Activated B cell treated with CpG ODN at 0.5 μM for 24 hours (primary cell): ENCODE measurements at regions of chr7 and their contacts with region 1.

Region 1: GRCh38 chr7:24812310-24812945 is 55.2 kb upstream of the GSDME start:
- DNase-seq: no peak
- ATAC-seq: peak; percentile 61
- H3K4me3 Mint-ChIP-seq: no peak overlapping the region
- H3K27ac Mint-ChIP-seq: no peak overlapping the region
- H3K4me1 Mint-ChIP-seq: no peaks in the 10 kb centered on the region
- H3K27me3 Mint-ChIP-seq: no peaks in the 10 kb centered on the region
- CTCF ChIP-seq: peak; percentile 85

Region 2: GRCh38 chr7:24701261-24702235 is 110.9 kb before region 1 on chr7:
- CTCF ChIA-PET with region 1: no interaction called
- POLR2A ChIA-PET with region 1: no interaction called
- intact Hi-C with region 1: no loop called
- DNase-seq: no peak
- ATAC-seq: no peak
- H3K4me3 Mint-ChIP-seq: no peak overlapping the region
- H3K27ac Mint-ChIP-seq: no peak overlapping the region
- H3K4me1 Mint-ChIP-seq: peaks cover 21% of the 10 kb centered on the region
- H3K27me3 Mint-ChIP-seq: no peaks in the 10 kb centered on the region
- CTCF ChIP-seq: no peak

Region 3: GRCh38 chr7:24732646-24733413 is 79.6 kb before region 1 on chr7:
- CTCF ChIA-PET with region 1: no interaction called
- POLR2A ChIA-PET with region 1: no interaction called
- intact Hi-C with region 1: no loop called
- DNase-seq: no peak
- ATAC-seq: no peak
- H3K4me3 Mint-ChIP-seq: no peak overlapping the region
- H3K27ac Mint-ChIP-seq: no peak overlapping the region
- H3K4me1 Mint-ChIP-seq: peaks cover 6% of the 10 kb centered on the region
- H3K27me3 Mint-ChIP-seq: peaks cover 6% of the 10 kb centered on the region
- CTCF ChIP-seq: no peak

Region 4: GRCh38 chr7:24764972-24765744 is 47.3 kb before region 1 on chr7:
- CTCF ChIA-PET with region 1: no interaction called
- POLR2A ChIA-PET with region 1: interaction called, 10 read pairs
- intact Hi-C with region 1: no loop called
- DNase-seq: no peak
- ATAC-seq: no peak
- H3K4me3 Mint-ChIP-seq: no peak overlapping the region
- H3K27ac Mint-ChIP-seq: no peak overlapping the region
- H3K4me1 Mint-ChIP-seq: peaks cover 2% of the 10 kb centered on the region
- H3K27me3 Mint-ChIP-seq: peaks cover 32% of the 10 kb centered on the region
- CTCF ChIP-seq: no peak

Region 5: DNA sequence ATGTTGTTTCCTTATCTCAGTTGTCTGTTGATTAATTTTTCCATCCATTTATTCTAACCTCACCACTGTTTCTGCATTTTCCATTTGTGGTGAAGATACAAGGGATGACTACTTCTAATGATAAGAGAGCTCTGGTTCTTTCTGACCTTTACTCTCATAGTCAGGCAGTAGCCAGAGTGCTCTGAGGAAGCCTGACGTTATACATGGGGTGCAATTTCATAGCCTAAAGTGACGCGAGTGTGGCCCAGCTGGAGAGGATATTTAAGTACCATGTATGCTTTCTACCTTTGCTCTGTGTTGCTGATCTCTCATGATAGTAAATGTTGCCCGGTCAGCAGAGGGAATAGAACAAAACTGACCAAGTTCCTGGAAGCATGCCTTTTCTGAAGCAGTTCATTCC is 346.5 kb after region 1 on chr7:
- CTCF ChIA-PET with region 1: no interaction called
- POLR2A ChIA-PET with region 1: no interaction called
- intact Hi-C with region 1: loop called (anchors 1 kb)
- DNase-seq: no peak
- ATAC-seq: no peak
- H3K4me3 Mint-ChIP-seq: no peak overlapping the region
- H3K27ac Mint-ChIP-seq: no peak overlapping the region
- H3K4me1 Mint-ChIP-seq: peaks cover 1% of the 10 kb centered on the region
- H3K27me3 Mint-ChIP-seq: no peaks in the 10 kb centered on the region
- CTCF ChIP-seq: no peak

Region 6: GRCh38 chr7:25456467-25457171 is 644.2 kb after region 1 on chr7:
- CTCF ChIA-PET with region 1: no interaction called
- POLR2A ChIA-PET with region 1: no interaction called
- intact Hi-C with region 1: no loop called
- DNase-seq: no peak
- ATAC-seq: no peak
- H3K4me3 Mint-ChIP-seq: no peak overlapping the region
- H3K27ac Mint-ChIP-seq: no peak overlapping the region
- H3K4me1 Mint-ChIP-seq: no peaks in the 10 kb centered on the region
- H3K27me3 Mint-ChIP-seq: peaks cover 9% of the 10 kb centered on the region
- CTCF ChIP-seq: no peak